Naive thymus-derived CD4-positive, alpha-beta T cell (primary cell): ENCODE measurements at regions of chr6 and their contacts with region 1.

Region 1: DNA sequence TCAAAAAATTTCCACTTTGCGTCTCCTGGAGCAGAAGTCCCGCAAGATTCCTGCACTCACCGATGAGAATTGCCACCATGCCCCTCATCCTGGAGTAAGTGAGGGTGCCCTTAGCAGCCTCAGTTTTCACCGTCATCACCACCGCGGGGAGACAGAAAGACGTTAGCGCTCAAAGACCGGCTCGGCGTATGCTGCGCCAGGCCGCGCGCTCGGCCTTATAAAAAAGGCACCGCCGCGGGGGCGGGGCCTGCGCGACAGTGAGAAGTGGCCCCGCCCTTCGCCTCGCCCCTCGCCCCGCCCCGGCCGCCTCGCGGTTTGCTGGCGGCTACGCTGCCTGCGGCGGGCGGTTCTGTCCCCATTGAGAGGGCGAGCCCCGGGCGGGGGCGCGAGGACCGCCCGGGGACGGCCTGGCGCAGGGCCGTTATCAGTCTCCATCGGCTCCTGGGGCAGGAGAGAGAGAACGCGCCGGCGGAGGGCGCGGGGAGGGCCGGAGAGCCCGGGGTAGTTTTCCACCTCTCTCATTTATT is 122.3 kb upstream of the SLC2A12 start:
- DNase-seq: peak; percentile 87 to 97 (median 93)
- ATAC-seq: peak; percentile 89
- H3K4me3 ChIP-seq: peak overlapping the region; percentile 71
- H3K4me3 Mint-ChIP-seq: peak overlapping the region; percentile 86 to 100 (median 98)
- H3K27ac ChIP-seq: peak overlapping the region; percentile 88
- H3K27ac Mint-ChIP-seq: peak overlapping the region; percentile 89 to 99 (median 97)
- H3K4me1 ChIP-seq: peaks cover 11 to 52% of the 10 kb centered on the region in 2 donors
- H3K4me1 Mint-ChIP-seq: peaks cover 48 to 78% (median 75%) of the 10 kb centered on the region in 7 donors
- H3K27me3 ChIP-seq: no peaks in the 10 kb centered on the region
- H3K27me3 Mint-ChIP-seq: no peaks in the 10 kb centered on the region

Region 2: GRCh38 chr6:132512638-132513632 is 1661.8 kb before region 1 on chr6 and contains the start of gene STX7:
- CTCF ChIA-PET with region 1: no interaction called
- POLR2A ChIA-PET with region 1: no interaction called
- intact Hi-C with region 1: loop called in 1 of 2 experiments (anchors 5 kb)
- DNase-seq: peak; percentile 77 to 90 (median 87)
- ATAC-seq: peak; percentile 95
- H3K4me3 ChIP-seq: peak within 1 kb of the TSS; percentile 78
- H3K4me3 Mint-ChIP-seq: peak within 1 kb of the TSS; percentile 89 to 99 (median 98)
- H3K27ac ChIP-seq: peak within 1 kb of the TSS; percentile 63
- H3K27ac Mint-ChIP-seq: peak within 1 kb of the TSS; percentile 81 to 95 (median 90)
- H3K4me1 ChIP-seq: peaks cover 10 to 11% of the 10 kb centered on the region in 2 donors
- H3K4me1 Mint-ChIP-seq: peaks cover 23 to 50% (median 38%) of the 10 kb centered on the region in 7 donors
- H3K27me3 ChIP-seq: no peaks in the 10 kb centered on the region
- H3K27me3 Mint-ChIP-seq: peaks cover 0 to 24% (median 0%) of the 10 kb centered on the region in 5 donors
- total RNA-seq, gene STX7: 14.7 to 43.3 (median 24.0) TPM

Region 3: DNA sequence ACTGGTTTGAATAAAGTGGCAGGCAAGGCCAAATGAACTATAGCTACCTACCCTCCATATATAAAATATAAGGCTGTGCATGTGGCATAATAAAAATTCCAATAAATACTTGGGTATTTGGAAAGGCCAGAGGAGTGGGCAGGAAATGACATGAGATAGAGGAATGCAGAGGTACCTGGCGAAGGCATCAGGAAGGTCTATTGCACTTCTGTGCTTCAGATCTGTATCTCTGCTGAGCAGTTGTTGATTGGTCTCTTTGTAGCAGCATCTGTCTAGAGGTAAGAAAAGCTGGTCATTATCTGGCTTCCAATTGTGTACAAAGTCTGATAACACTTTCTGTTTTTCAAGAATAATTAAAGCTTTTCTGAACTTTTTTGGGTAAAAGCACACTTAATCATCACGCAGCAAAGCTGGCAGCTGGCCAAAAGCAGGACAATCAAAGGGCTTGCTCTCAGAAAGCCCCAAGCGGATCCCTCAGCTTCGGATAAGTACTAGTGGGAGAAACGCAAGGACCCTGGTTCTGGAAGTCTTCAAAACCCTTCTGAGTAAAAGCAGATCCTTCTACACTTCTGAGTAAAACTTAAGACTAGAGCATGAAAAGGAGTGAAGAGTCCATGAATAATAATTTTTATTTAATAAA is 406.0 kb before region 1 on chr6:
- CTCF ChIA-PET with region 1: no interaction called
- POLR2A ChIA-PET with region 1: no interaction called
- intact Hi-C with region 1: no loop called
- DNase-seq: no peak
- ATAC-seq: no peak
- H3K4me3 ChIP-seq: no peak overlapping the region
- H3K4me3 Mint-ChIP-seq: no peak overlapping the region
- H3K27ac ChIP-seq: no peak overlapping the region
- H3K27ac Mint-ChIP-seq: no peak overlapping the region
- H3K4me1 ChIP-seq: no peaks in the 10 kb centered on the region
- H3K4me1 Mint-ChIP-seq: no peaks in the 10 kb centered on the region
- H3K27me3 ChIP-seq: no peaks in the 10 kb centered on the region
- H3K27me3 Mint-ChIP-seq: peaks cover 5 to 44% (median 27%) of the 10 kb centered on the region in 5 donors

Region 4: GRCh38 chr6:134247231-134247833 is 72.6 kb after region 1 on chr6:
- CTCF ChIA-PET with region 1: no interaction called
- POLR2A ChIA-PET with region 1: interaction called, 8 read pairs
- intact Hi-C with region 1: loop called (anchors 1 kb)
- DNase-seq: peak in 8 of 9 donors; percentile 67 to 96 (median 93)
- ATAC-seq: peak; percentile 97
- H3K4me3 ChIP-seq: peak overlapping the region; percentile 21
- H3K4me3 Mint-ChIP-seq: peak overlapping the region; percentile 50 to 84 (median 75)
- H3K27ac ChIP-seq: peak overlapping the region; percentile 77
- H3K27ac Mint-ChIP-seq: peak overlapping the region; percentile 83 to 99 (median 94)
- H3K4me1 ChIP-seq: peaks cover 34 to 60% of the 10 kb centered on the region in 2 donors
- H3K4me1 Mint-ChIP-seq: peaks cover 30 to 75% (median 63%) of the 10 kb centered on the region in 7 donors
- H3K27me3 ChIP-seq: no peaks in the 10 kb centered on the region
- H3K27me3 Mint-ChIP-seq: no peaks in the 10 kb centered on the region

Region 5: DNA sequence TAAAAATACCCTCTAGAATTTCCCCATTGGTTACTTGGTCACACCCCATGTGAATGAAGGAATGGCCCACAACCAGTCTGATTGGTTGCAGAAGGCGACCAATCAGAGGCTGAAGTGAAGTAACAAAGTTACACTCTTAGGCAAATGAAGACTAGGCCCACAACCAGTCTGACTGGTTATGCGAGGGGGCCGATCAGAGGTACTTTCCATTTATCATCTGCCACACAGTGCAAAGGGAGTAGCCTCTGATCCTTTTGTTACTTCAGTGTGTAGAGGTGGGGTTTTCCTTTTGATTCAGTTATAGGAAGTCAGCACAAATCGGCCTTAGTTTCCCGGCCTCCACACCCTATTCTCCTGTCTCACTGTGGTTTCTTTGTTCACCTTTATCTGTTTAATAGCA is 204.4 kb after region 1 on chr6:
- CTCF ChIA-PET with region 1: interaction called, 3 read pairs
- POLR2A ChIA-PET with region 1: interaction called, 3 read pairs
- intact Hi-C with region 1: loop called in 1 of 2 experiments (anchors 1 kb)
- DNase-seq: peak in 2 of 9 donors; percentile 38 to 39
- ATAC-seq: peak; percentile 78
- H3K4me3 ChIP-seq: no peak overlapping the region
- H3K4me3 Mint-ChIP-seq: peak overlapping the region in 5 of 10 donors; percentile 31 to 66 (median 43)
- H3K27ac ChIP-seq: no peak overlapping the region
- H3K27ac Mint-ChIP-seq: peak overlapping the region in 7 of 9 donors; percentile 26 to 84 (median 56)
- H3K4me1 ChIP-seq: peaks cover 14 to 17% of the 10 kb centered on the region in 2 donors
- H3K4me1 Mint-ChIP-seq: peaks cover 15 to 42% (median 41%) of the 10 kb centered on the region in 7 donors
- H3K27me3 ChIP-seq: no peaks in the 10 kb centered on the region
- H3K27me3 Mint-ChIP-seq: no peaks in the 10 kb centered on the region

Region 6: DNA sequence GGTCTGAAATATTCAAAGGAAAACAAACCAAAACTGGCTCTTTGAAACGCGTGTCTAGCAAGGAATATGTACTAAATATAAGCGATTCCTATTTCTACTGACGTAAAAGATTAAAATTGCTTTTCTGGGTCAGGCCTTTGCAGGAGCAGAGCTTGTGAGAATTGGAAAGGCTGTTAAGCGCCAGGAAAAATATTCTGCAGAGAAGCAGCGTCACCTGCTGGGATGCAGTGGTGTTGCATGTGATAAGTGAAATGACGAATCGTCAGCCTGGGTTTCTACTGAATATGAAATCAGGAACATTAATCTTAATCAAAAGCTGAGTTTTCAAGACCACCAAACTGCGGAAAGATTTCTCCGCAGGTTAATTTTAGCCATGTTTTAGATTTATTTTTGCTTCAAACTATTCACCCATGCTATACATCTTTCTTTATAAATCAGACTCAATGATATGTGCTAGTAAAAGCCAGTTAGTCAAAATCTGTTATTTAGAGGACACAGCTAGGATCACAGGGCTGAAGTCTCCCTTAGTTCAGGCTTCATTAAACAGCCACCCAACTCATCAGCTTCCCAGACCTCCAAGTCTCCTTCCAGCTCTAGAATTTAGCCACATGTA is 707.8 kb after region 1 on chr6:
- CTCF ChIA-PET with region 1: interaction called, 4 read pairs
- POLR2A ChIA-PET with region 1: no interaction called
- intact Hi-C with region 1: loop called (anchors 1 kb)
- DNase-seq: peak in 7 of 9 donors; percentile 14 to 57 (median 41)
- ATAC-seq: no peak
- H3K4me3 ChIP-seq: no peak overlapping the region
- H3K4me3 Mint-ChIP-seq: no peak overlapping the region
- H3K27ac ChIP-seq: no peak overlapping the region
- H3K27ac Mint-ChIP-seq: no peak overlapping the region
- H3K4me1 ChIP-seq: no peaks in the 10 kb centered on the region
- H3K4me1 Mint-ChIP-seq: peaks cover 0 to 5% (median 0%) of the 10 kb centered on the region in 7 donors
- H3K27me3 ChIP-seq: no peaks in the 10 kb centered on the region
- H3K27me3 Mint-ChIP-seq: peaks cover 4 to 32% (median 11%) of the 10 kb centered on the region in 5 donors

Region 7: GRCh38 chr6:135094403-135094848 is 919.7 kb after region 1 on chr6:
- CTCF ChIA-PET with region 1: no interaction called
- POLR2A ChIA-PET with region 1: no interaction called
- intact Hi-C with region 1: loop called in 1 of 2 experiments (anchors 1 kb)
- DNase-seq: peak in 6 of 9 donors; percentile 57 to 75 (median 64)
- ATAC-seq: peak; percentile 88
- H3K4me3 ChIP-seq: no peak overlapping the region
- H3K4me3 Mint-ChIP-seq: peak overlapping the region; percentile 3 to 70 (median 54)
- H3K27ac ChIP-seq: peak overlapping the region; percentile 56
- H3K27ac Mint-ChIP-seq: peak overlapping the region; percentile 80 to 98 (median 90)
- H3K4me1 ChIP-seq: peaks cover 17 to 41% of the 10 kb centered on the region in 2 donors
- H3K4me1 Mint-ChIP-seq: peaks cover 19 to 95% (median 79%) of the 10 kb centered on the region in 7 donors
- H3K27me3 ChIP-seq: no peaks in the 10 kb centered on the region
- H3K27me3 Mint-ChIP-seq: no peaks in the 10 kb centered on the region